ENCODE measurements at regions of chr5 and their contacts with region 1.

Region 1: GRCh38 chr5:76771705-76772405 is 47.0 kb upstream of the F2RL1 start:
- DNase-seq: no peak
- H3K4me3 ChIP-seq: no peak overlapping the region
- H3K27me3 ChIP-seq: no peaks in the 10 kb centered on the region
- CTCF ChIP-seq: no peak

Region 2: GRCh38 chr5:76582230-76583162 is 189.4 kb before region 1 on chr5:
- CTCF ChIA-PET with region 1: no interaction called
- POLR2A ChIA-PET with region 1: no interaction called
- DNase-seq: no peak
- H3K4me3 ChIP-seq: no peak overlapping the region
- H3K27me3 ChIP-seq: peaks cover 7% of the 10 kb centered on the region
- CTCF ChIP-seq: no peak

Region 3: DNA sequence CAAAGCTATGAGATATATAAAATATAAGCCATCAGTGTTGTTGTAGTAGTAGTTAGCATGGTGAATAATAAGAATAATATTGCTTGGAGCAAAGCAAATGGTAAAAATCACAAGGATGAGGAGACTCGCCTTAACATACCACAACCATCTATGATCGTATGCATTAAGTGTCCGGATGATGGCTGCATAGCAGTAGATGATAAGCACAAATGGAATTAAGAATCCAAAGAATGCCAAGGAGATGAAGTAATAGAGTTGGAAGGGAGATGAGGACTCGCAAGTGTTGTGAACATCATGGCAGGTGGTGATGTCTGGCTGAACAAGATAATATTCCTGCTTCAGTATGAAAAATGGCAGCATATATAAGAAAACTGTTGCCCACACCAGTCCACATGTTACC is 154.2 kb before region 1 on chr5:
- CTCF ChIA-PET with region 1: interaction called, 11 read pairs
- POLR2A ChIA-PET with region 1: no interaction called
- DNase-seq: peak; percentile 43
- H3K4me3 ChIP-seq: no peak overlapping the region
- H3K27me3 ChIP-seq: no peaks in the 10 kb centered on the region
- CTCF ChIP-seq: no peak

Region 4: DNA sequence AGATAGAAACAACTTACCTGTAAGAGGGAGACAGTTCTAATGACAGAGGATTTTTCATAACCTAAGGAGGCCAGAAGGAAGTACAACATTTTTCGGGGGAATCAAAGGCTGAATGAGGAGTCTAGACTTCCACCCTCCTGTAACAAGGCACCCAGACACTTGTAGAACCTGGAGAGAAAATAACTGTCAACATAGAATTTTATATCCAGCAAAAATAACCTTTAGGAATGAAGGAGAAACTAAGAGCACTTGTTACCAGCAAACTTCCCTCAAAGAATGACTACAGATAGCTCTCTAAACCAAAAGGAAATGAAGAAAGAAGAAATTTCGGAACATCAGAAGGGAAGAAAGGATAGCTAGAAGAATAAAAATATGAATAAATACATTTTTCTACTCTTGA is 122.7 kb before region 1 on chr5:
- CTCF ChIA-PET with region 1: interaction called, 14 read pairs
- POLR2A ChIA-PET with region 1: no interaction called
- DNase-seq: no peak
- H3K4me3 ChIP-seq: no peak overlapping the region
- H3K27me3 ChIP-seq: no peaks in the 10 kb centered on the region
- CTCF ChIP-seq: no peak

Region 5: GRCh38 chr5:76705574-76705973 is 66.3 kb before region 1 on chr5:
- CTCF ChIA-PET with region 1: interaction called, 10 read pairs
- POLR2A ChIA-PET with region 1: no interaction called
- DNase-seq: no peak
- H3K4me3 ChIP-seq: no peak overlapping the region
- H3K27me3 ChIP-seq: peaks cover 9% of the 10 kb centered on the region
- CTCF ChIP-seq: no peak

Region 6: DNA sequence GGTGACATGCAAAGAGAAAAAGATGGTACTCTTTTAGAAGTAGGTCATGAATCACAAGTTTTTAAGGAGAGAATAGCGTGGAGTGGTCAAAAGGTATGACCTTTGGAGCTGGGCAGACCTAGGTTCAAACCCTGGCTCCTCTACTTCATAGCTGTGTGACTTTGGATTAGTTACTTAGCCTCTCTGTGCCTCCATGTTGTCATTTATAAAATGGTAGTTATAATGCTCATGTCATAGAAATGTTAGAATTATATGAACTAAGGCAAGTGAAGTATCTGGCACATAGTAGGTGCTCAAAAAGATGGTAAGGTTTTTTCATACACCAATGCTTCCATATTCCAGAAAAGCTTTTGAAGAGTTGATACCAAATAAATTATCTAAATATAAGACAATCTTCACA is 48.6 kb before region 1 on chr5:
- CTCF ChIA-PET with region 1: interaction called, 12 read pairs
- POLR2A ChIA-PET with region 1: no interaction called
- DNase-seq: no peak
- H3K4me3 ChIP-seq: no peak overlapping the region
- H3K27me3 ChIP-seq: no peaks in the 10 kb centered on the region
- CTCF ChIP-seq: no peak

Region 7: GRCh38 chr5:76782444-76782843 is 10.6 kb after region 1 on chr5:
- CTCF ChIA-PET with region 1: interaction called, 22 read pairs
- POLR2A ChIA-PET with region 1: no interaction called
- DNase-seq: no peak
- H3K4me3 ChIP-seq: no peak overlapping the region
- H3K27me3 ChIP-seq: no peaks in the 10 kb centered on the region; the same call in 1 of the 2 replicates
- CTCF ChIP-seq: no peak

Region 8: DNA sequence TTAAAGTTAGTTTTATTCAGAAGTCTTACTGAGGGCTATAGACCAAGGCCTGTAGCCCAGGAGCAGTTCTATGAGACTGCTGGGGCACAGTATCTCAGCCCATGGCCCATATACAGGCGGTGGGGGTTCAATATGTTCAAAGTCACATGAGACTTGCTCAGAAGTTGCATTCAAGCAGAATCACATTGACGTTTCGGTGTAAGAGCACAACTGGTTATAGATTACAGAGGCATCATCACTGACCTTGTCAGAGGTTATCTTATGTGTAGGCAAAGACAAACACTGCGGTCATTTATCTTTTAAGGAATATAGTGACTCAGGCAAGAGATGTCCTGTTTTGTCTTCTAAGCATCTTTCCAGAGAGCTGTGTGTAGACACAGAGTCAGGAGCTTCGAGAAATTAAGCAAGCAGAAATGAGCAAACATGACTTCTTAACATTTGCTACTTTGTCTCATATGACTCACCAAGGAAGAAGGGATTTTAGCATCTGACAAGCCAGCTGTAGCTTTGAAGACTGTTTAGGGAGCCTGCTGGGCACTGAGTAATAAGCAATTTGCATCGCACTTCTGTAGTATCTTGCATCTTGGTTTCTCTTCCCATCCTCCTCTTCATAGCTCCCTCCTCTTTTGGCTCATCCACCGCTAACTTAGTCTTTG is 34.1 kb after region 1 on chr5:
- CTCF ChIA-PET with region 1: interaction called, 15 read pairs
- POLR2A ChIA-PET with region 1: no interaction called
- DNase-seq: peak; percentile 87
- H3K4me3 ChIP-seq: no peak overlapping the region
- H3K27me3 ChIP-seq: peaks cover 2% of the 10 kb centered on the region
- CTCF ChIP-seq: no peak